Common myeloid progenitor, CD34-positive (primary cell): ENCODE measurements at regions of chr19 and their contacts with region 1.

Region 1: GRCh38 chr19:18469069-18469846 is 31.3 kb upstream of the ISYNA1 start:
- DNase-seq: peak; percentile 50 to 77 (median 67)
- H3K4me3 ChIP-seq: no peak overlapping the region
- H3K27ac ChIP-seq: no peak overlapping the region
- H3K4me1 ChIP-seq: peaks cover 0 to 18% (median 15%) of the 10 kb centered on the region in 4 experiments
- H3K27me3 ChIP-seq: no peaks in the 10 kb centered on the region

Region 2: GRCh38 chr19:18373892-18374629 is 95.2 kb before region 1 on chr19:
- CTCF ChIA-PET with region 1: no interaction called
- POLR2A ChIA-PET with region 1: no interaction called
- DNase-seq: peak; percentile 80 to 97 (median 95)
- H3K4me3 ChIP-seq: peak overlapping the region in 6 of 7 experiments; percentile 5 to 57 (median 38)
- H3K27ac ChIP-seq: peak overlapping the region; percentile 61 to 90
- H3K4me1 ChIP-seq: peaks cover 4 to 45% (median 30%) of the 10 kb centered on the region in 4 experiments
- H3K27me3 ChIP-seq: no peaks in the 10 kb centered on the region

Region 3: GRCh38 chr19:18450931-18451845 is 18.1 kb before region 1 on chr19:
- CTCF ChIA-PET with region 1: interaction called, 109 read pairs
- POLR2A ChIA-PET with region 1: no interaction called
- DNase-seq: peak; percentile 62 to 78 (median 72)
- H3K4me3 ChIP-seq: no peak overlapping the region
- H3K27ac ChIP-seq: no peak overlapping the region
- H3K4me1 ChIP-seq: peaks cover 0 to 3% (median 0%) of the 10 kb centered on the region in 4 experiments
- H3K27me3 ChIP-seq: no peaks in the 10 kb centered on the region

Region 4: GRCh38 chr19:18456974-18457373 is 12.3 kb before region 1 on chr19:
- CTCF ChIA-PET with region 1: interaction called, 109 read pairs
- POLR2A ChIA-PET with region 1: no interaction called
- DNase-seq: no peak
- H3K4me3 ChIP-seq: no peak overlapping the region
- H3K27ac ChIP-seq: no peak overlapping the region
- H3K4me1 ChIP-seq: no peaks in the 10 kb centered on the region
- H3K27me3 ChIP-seq: no peaks in the 10 kb centered on the region

Region 5: GRCh38 chr19:18483119-18483890 is 14.0 kb after region 1 on chr19:
- CTCF ChIA-PET with region 1: interaction called, 14 read pairs
- POLR2A ChIA-PET with region 1: no interaction called
- DNase-seq: no peak
- H3K4me3 ChIP-seq: no peak overlapping the region
- H3K27ac ChIP-seq: no peak overlapping the region
- H3K4me1 ChIP-seq: peaks cover 0 to 56% (median 21%) of the 10 kb centered on the region in 4 experiments
- H3K27me3 ChIP-seq: no peaks in the 10 kb centered on the region

Region 6: GRCh38 chr19:18515959-18516358 is 46.7 kb after region 1 on chr19:
- CTCF ChIA-PET with region 1: interaction called, 11 read pairs
- POLR2A ChIA-PET with region 1: no interaction called
- DNase-seq: no peak
- H3K4me3 ChIP-seq: no peak overlapping the region
- H3K27ac ChIP-seq: no peak overlapping the region
- H3K4me1 ChIP-seq: peaks cover 2 to 22% (median 10%) of the 10 kb centered on the region in 4 experiments
- H3K27me3 ChIP-seq: no peaks in the 10 kb centered on the region

Region 7: GRCh38 chr19:18562086-18562485 is 92.8 kb after region 1 on chr19:
- CTCF ChIA-PET with region 1: no interaction called
- POLR2A ChIA-PET with region 1: no interaction called
- DNase-seq: no peak
- H3K4me3 ChIP-seq: no peak overlapping the region
- H3K27ac ChIP-seq: no peak overlapping the region
- H3K4me1 ChIP-seq: peaks cover 5 to 18% (median 11%) of the 10 kb centered on the region in 4 experiments
- H3K27me3 ChIP-seq: no peaks in the 10 kb centered on the region